Astrocyte of the cerebellum (primary cell): ENCODE measurements at regions of chr2 and their contacts with region 1.

Region 1: GRCh38 chr2:80610108-80610507 is 305.6 kb upstream of the LRRTM1 start:
- DNase-seq: no peak
- H3K4me3 ChIP-seq: no peak overlapping the region
- CTCF ChIP-seq: no peak

Region 2: GRCh38 chr2:80560326-80560725 is 49.8 kb before region 1 on chr2:
- in situ Hi-C with region 1: no loop called
- DNase-seq: no peak
- H3K4me3 ChIP-seq: no peak overlapping the region
- CTCF ChIP-seq: no peak

Region 3: DNA sequence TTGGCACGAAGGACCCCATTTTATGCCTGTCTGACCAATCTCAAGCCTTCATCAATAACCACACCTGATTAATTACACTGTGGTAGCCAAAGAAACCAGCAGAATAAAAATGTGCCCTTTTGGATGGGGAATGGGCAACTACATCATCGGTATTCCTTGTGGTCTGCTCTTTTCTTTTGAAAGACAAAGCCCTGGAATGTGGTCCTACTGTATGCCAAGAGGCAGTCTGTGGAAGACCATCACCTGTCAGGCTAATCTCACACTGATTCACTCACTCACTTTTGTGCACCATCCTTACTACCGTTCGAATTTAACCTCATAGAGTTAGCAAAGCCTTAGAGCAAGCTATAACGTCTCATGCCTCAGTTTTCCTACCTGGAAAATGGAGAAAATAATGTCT is 30.4 kb before region 1 on chr2:
- in situ Hi-C with region 1: loop called (anchors 5 kb)
- DNase-seq: no peak
- H3K4me3 ChIP-seq: no peak overlapping the region
- CTCF ChIP-seq: no peak